ENCODE measurements at regions of chr5 and their contacts with region 1.

Region 1: GRCh38 chr5:132386644-132387286 is 17.3 kb downstream of the SLC22A5 start:
- DNase-seq: peak; percentile 79
- H3K27ac ChIP-seq: peak overlapping the region; percentile 96
- CTCF ChIP-seq: peak; percentile 91

Region 2: GRCh38 chr5:131622633-131623032 is 764.1 kb before region 1 on chr5:
- CTCF ChIA-PET with region 1: no interaction called
- POLR2A ChIA-PET with region 1: no interaction called
- DNase-seq: no peak
- H3K27ac ChIP-seq: no peak overlapping the region
- CTCF ChIP-seq: no peak

Region 3: GRCh38 chr5:131661931-131662330 is 724.8 kb before region 1 on chr5:
- CTCF ChIA-PET with region 1: no interaction called
- POLR2A ChIA-PET with region 1: no interaction called
- DNase-seq: no peak
- H3K27ac ChIP-seq: no peak overlapping the region
- CTCF ChIP-seq: no peak

Region 4: DNA sequence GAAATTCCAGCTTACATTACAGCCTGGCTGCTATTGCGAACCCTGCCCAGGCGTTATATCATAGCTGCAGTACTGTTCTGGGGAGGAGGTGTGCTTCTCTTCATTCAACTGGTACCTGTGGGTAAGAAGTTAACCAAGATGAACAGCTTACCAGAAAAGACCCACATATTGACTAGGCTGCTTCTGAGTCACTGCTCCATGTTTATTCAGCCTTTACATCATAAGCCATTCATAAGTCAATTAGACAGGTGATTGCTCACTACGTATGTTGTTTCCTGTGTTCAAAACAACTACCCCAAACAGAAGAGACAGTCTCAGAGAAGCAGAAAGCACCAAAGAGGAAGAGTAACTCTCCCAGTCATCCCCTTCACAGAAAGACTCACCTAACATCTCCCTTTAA is 52.0 kb before region 1 on chr5:
- CTCF ChIA-PET with region 1: no interaction called
- POLR2A ChIA-PET with region 1: no interaction called
- DNase-seq: peak; percentile 63
- H3K27ac ChIP-seq: no peak overlapping the region
- CTCF ChIP-seq: no peak

Region 5: DNA sequence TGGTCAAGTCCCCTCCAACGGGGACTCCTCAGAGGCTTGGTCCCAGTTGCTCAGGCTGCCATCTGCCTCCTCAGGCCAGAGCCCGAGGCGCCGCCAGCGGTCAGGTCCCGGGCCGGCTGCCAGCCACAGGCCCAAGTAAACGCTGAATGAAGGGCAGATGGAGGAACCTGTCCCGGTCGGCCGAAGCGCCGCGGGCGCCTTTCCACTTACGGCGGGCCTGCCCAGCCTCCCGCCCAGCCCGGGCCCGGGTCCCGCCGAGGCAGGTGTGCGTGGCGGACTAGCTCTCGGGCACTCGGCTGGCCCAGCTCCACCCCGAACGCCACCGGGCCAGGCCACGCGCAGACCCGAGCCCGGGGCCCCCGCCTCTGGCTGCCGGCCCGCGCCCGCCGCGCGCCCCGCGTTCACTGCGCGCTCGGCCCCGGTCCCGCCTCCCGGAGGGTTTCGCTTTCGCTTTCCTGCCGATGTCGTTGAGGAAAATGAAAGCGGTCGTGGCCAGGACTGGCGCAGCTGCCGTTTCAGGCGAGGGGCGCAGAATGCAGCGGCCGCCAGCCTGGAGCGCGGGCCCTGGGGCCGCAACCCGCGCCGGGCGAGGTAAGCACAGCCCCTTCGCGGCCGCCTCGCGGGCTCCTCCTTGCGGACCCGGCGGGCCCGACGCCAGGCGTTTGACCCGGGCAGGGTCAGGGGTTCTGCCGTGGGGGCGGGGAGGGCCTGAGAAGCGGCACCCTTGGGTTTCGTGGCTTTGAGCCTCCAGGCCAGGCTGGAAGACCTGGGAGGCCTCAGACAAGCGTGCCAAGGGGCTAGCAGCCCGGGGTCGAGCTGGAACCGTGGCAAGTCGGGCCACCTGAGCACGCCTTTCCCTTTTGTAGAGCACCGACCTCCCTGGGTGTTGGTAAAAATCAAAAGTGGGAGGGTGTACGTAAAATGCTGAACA is 24.0 kb after region 1 on chr5:
- CTCF ChIA-PET with region 1: interaction called, 17 read pairs
- POLR2A ChIA-PET with region 1: interaction called, 3 read pairs
- DNase-seq: peak; percentile 83
- H3K27ac ChIP-seq: peak overlapping the region; percentile 96
- CTCF ChIP-seq: peak; percentile 79

Region 6: GRCh38 chr5:132426525-132427138 is 39.9 kb after region 1 on chr5:
- CTCF ChIA-PET with region 1: interaction called, 12 read pairs
- POLR2A ChIA-PET with region 1: no interaction called
- DNase-seq: peak; percentile 93
- H3K27ac ChIP-seq: peak overlapping the region; percentile 68
- CTCF ChIP-seq: no peak

Region 7: GRCh38 chr5:132490486-132491367 is 104.0 kb after region 1 on chr5 and contains the start of gene IRF1:
- CTCF ChIA-PET with region 1: interaction called, 21 read pairs
- POLR2A ChIA-PET with region 1: no interaction called
- DNase-seq: peak; percentile 98
- H3K27ac ChIP-seq: peak within 1 kb of the TSS; percentile 89
- CTCF ChIP-seq: 0 out of 2 replicates have a peak, but pooled peaks have one; percentile 36

Region 8: GRCh38 chr5:132495667-132496190 is 109.0 kb after region 1 on chr5:
- CTCF ChIA-PET with region 1: interaction called, 21 read pairs
- POLR2A ChIA-PET with region 1: no interaction called
- DNase-seq: peak; percentile 83
- H3K27ac ChIP-seq: peak overlapping the region; percentile 95
- CTCF ChIP-seq: no peak

Region 9: GRCh38 chr5:132500931-132501630 is 114.3 kb after region 1 on chr5:
- CTCF ChIA-PET with region 1: interaction called, 19 read pairs
- POLR2A ChIA-PET with region 1: no interaction called
- DNase-seq: peak; percentile 43
- H3K27ac ChIP-seq: peak overlapping the region; percentile 95
- CTCF ChIP-seq: peak; percentile 66; the same call in 1 of the 2 replicates

Region 10: GRCh38 chr5:132820162-132820754 is 433.5 kb after region 1 on chr5:
- CTCF ChIA-PET with region 1: interaction called, 13 read pairs
- POLR2A ChIA-PET with region 1: no interaction called
- DNase-seq: peak; percentile 88
- H3K27ac ChIP-seq: no peak overlapping the region
- CTCF ChIP-seq: peak; percentile 93